Activated CD8-positive, alpha-beta T cell treated with anti-CD3 and anti-CD28 coated beads for 36 hours (primary cell): ENCODE measurements at regions of chr10 and their contacts with region 1.

Region 1: DNA sequence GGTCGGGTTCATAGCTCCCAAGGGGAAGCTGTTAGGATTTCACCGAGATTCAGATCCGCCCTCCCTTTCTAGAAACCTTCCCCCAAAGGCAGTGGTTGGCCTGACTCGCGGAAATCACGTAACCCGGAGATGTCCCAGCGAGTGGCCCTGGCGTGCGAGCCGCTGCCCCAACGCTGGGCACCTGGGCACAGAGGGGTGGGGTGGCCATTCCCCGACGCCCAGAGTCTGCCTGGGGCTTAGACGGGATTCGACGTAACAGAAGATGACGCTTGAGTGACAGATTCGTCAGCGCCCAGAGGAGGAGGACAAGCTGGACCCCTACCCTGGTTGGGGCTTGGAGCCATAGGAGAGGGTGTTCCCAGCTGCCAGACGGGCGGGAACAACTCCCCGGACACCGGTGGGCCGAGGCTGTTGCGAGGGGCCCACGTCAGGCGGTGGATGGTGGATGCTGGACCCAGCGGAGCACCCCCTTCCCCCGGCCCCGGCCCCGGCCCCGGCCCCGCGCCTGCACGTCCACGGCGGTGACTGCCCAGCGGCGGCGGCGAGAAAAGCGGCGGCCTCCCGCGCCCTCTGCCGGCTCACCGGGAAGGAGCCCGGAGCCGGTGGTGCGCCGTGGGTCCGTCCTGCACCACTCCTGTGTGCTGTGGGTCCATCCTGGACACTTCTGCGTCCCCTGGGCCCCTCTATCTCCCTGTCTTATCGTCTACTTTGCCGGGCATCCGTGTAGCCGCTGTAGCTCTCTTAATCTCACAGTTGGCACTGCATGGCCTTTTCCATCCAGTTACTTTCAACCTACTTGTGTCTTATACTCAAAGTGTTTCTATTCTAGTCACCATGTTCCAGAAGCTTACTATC is 35.4 kb upstream of the KNDC1 start:
- DNase-seq: peak; percentile 42
- ATAC-seq: peak; percentile 41
- H3K4me3 Mint-ChIP-seq: no peak overlapping the region
- H3K27ac Mint-ChIP-seq: no peak overlapping the region
- H3K4me1 Mint-ChIP-seq: peaks cover 5% of the 10 kb centered on the region
- H3K27me3 Mint-ChIP-seq: peaks cover 14% of the 10 kb centered on the region
- CTCF ChIP-seq: peak; percentile 66

Region 2: DNA sequence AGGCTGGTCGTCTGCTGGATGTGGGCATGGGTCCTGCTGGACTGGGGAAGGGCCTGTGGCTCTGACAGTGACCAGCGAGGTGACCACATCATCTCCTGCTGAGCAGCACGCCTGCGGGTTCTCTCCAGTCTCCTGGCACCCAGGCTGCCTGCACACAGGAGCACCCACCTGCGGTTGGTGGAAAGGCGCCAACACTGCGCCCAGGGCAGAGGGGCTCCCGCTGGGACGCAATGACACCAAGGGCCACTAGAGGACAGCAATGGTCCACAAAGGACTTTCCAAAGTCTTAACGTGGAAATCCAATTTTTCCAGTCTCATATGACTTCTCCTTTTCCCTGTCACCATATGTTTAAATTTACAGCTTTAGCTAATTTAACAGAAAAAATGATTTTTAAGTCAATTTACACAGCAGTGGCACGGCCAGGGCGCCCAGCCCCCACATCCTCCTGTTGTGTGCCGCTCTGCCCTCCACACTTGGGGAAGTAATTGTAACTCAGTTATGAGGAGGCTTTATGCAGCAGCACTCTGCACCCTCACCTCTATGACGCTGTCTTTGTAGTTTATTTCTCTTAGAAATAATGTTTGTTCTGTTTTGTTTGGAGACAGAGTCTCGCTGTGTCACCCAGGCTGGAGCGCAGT is 220.3 kb before region 1 on chr10:
- CTCF ChIA-PET with region 1: interaction called, 23 read pairs
- POLR2A ChIA-PET with region 1: no interaction called
- intact Hi-C with region 1: no loop called
- DNase-seq: peak; percentile 62
- ATAC-seq: peak; percentile 71
- H3K4me3 Mint-ChIP-seq: no peak overlapping the region
- H3K27ac Mint-ChIP-seq: peak overlapping the region; percentile 5
- H3K4me1 Mint-ChIP-seq: peaks cover 15% of the 10 kb centered on the region
- H3K27me3 Mint-ChIP-seq: peaks cover 9% of the 10 kb centered on the region
- CTCF ChIP-seq: peak; percentile 98

Region 3: GRCh38 chr10:132939957-132940790 is 184.4 kb before region 1 on chr10:
- CTCF ChIA-PET with region 1: interaction called, 13 read pairs
- POLR2A ChIA-PET with region 1: no interaction called
- intact Hi-C with region 1: loop called (anchors 5 kb)
- DNase-seq: peak; percentile 74
- ATAC-seq: peak; percentile 75
- H3K4me3 Mint-ChIP-seq: no peak overlapping the region
- H3K27ac Mint-ChIP-seq: no peak overlapping the region
- H3K4me1 Mint-ChIP-seq: peaks cover 13% of the 10 kb centered on the region
- H3K27me3 Mint-ChIP-seq: peaks cover 49% of the 10 kb centered on the region
- CTCF ChIP-seq: peak; percentile 70